CD4-positive, alpha-beta memory T cell (primary cell): ENCODE measurements at regions of chr5 and their contacts with region 1.

Region 1: DNA sequence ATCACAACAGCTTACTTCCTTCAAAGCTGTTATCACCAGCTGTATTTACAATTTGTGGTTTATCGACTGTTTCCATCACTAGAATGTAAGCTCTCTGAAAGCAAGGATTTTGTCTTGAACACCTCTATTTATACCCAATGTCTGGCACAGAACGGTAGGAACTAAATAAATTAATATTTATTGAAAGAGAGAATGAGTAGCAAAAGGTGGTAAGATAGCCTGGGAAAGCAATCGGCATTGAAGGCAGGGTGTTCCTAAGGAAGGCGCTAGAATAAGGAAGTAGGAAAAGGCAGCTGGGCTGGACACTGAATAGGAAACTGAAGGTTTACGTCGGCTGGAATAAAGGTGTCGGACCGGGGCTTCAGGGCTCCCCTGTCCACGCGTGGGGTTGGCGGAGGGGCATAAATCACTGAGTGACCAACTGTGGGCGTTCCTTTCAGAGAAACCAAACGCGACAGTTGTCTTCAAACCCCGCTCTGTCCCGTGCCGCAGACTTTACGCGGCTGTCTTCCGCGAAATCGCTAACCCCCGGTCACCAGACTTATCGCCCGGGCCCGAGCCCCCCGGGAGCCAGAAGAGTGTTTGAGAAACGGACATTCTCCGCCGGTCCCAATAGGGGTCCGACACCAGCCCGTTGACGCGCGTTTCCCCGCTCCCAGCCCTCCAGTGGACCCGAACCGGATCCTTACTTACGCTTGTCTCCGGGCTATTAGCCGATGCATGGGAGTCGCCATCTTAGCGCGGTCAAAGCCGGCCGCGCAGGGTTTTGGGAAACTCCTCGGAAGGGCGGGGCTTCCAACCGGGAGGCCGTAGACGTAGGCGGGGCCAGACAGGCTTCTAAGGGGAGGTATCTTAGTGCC is at the start of gene ZCCHC10:
- DNase-seq: peak; percentile 86 to 92 (median 87)
- H3K4me3 ChIP-seq: peak within 1 kb of the TSS; percentile 81 to 92
- H3K4me3 Mint-ChIP-seq: peak within 1 kb of the TSS; percentile 92 to 97 (median 96)
- H3K27ac ChIP-seq: peak within 1 kb of the TSS; percentile 98
- H3K27ac Mint-ChIP-seq: peak within 1 kb of the TSS; percentile 94 to 98 (median 97)
- H3K4me1 ChIP-seq: peaks cover 20% of the 10 kb centered on the region
- H3K4me1 Mint-ChIP-seq: peaks cover 14 to 30% (median 18%) of the 10 kb centered on the region in 4 donors
- H3K27me3 ChIP-seq: no peaks in the 10 kb centered on the region
- H3K27me3 Mint-ChIP-seq: no peaks in the 10 kb centered on the region
- total RNA-seq, gene ZCCHC10: 20.1 to 20.6 TPM

Region 2: GRCh38 chr5:132839426-132840301 is 186.4 kb before region 1 on chr5:
- CTCF ChIA-PET with region 1: no interaction called
- POLR2A ChIA-PET with region 1: no interaction called
- intact Hi-C with region 1: no loop called
- DNase-seq: no peak
- H3K4me3 ChIP-seq: no peak overlapping the region
- H3K4me3 Mint-ChIP-seq: no peak overlapping the region
- H3K27ac ChIP-seq: no peak overlapping the region
- H3K27ac Mint-ChIP-seq: no peak overlapping the region
- H3K4me1 ChIP-seq: no peaks in the 10 kb centered on the region
- H3K4me1 Mint-ChIP-seq: no peaks in the 10 kb centered on the region
- H3K27me3 ChIP-seq: no peaks in the 10 kb centered on the region
- H3K27me3 Mint-ChIP-seq: no peaks in the 10 kb centered on the region

Region 3: DNA sequence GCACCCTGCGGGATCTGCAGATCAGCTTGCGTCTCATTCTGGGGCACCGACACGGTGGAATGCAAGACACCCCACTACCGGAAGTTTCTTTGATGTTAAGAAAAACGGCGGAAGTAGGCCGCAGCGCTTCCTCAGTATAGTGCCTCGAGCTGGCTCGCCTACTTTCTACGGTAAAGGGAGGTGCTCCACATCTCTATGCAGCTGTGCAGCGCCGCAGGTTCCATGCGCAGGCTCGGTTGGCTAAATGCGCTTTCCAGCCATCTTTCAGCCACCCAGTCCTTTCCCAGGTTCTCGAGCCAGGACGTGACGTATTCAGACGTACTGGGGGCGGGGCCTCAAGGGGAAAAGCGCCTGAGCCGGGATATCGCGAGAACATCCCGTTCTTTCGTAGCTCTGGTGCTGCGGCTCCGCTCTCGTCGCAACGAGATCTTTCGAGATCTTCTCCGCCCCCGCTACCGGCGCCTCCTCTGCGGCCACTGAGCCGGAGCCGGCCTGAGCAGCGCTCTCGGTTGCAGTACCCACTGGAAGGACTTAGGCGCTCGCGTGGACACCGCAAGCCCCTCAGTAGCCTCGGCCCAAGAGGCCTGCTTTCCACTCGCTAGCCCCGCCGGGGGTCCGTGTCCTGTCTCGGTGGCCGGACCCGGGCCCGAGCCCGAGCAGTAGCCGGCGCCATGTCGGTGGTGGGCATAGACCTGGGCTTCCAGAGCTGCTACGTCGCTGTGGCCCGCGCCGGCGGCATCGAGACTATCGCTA is 25.7 kb after region 1 on chr5 and contains the start of gene HSPA4:
- CTCF ChIA-PET with region 1: no interaction called
- POLR2A ChIA-PET with region 1: interaction called, 36 read pairs
- intact Hi-C with region 1: loop called (anchors 1 kb)
- DNase-seq: peak; percentile 97 to 99 (median 98)
- H3K4me3 ChIP-seq: peak within 1 kb of the TSS; percentile 97 to 99
- H3K4me3 Mint-ChIP-seq: peak within 1 kb of the TSS; percentile 96 to 99 (median 98)
- H3K27ac ChIP-seq: peak within 1 kb of the TSS; percentile 99
- H3K27ac Mint-ChIP-seq: peak within 1 kb of the TSS; percentile 99 to 100 (median 100)
- H3K4me1 ChIP-seq: peaks cover 54% of the 10 kb centered on the region
- H3K4me1 Mint-ChIP-seq: peaks cover 31 to 65% (median 49%) of the 10 kb centered on the region in 4 donors
- H3K27me3 ChIP-seq: no peaks in the 10 kb centered on the region
- H3K27me3 Mint-ChIP-seq: no peaks in the 10 kb centered on the region
- total RNA-seq, gene HSPA4: 55.9 to 58.1 TPM